Activated naive CD4-positive, alpha-beta T cell treated with anti-CD3 and anti-CD28 coated beads, Interleukin-2, amount 10 ng/mL, durations not matched to agents 7 days and 5 days (primary cell): ENCODE measurements at regions of chr17 and their contacts with region 1.

Region 1: DNA sequence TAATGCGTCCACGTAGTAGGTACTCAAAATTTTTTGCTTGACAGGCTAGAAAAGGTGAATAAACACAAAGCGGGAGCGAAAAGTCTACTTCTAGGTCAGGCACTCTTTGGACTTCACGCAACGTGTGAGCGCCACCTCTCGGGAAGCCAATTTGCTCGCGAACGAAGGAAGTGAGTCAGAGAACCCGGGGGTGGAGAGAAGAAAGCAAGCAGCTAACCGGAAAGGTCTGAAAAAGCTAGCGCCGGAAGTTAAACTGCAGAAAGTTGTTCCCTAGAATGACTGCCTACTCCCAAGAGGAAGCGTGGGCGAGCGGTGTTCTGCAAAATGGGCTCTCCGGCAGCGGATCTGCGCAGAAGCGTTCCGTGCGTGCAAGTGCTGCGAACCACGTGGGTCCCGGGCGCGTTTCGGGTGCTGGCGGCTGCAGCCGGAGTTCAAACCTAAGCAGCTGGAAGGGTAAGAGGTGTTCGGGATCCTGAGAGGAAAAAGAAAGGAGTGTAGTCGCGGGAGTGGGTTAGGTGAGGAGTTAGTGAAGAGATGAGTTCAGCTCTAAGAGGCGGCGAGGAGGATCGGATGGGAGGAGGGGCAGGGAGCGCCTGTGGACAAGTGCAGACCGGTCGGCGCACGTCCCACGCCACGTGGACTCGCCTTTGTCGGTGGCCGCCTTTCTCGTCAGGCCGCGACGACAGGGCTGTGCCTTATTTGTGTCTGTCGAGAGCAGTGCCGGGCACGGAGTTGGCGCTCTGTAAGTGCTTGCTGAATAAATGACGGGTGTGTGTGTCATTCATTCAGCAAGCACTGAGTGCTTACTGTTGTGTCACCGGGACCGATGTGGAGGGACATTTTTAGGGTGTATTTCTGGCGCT is at the start of gene NME1:
- DNase-seq: peak; percentile 97
- H3K4me3 Mint-ChIP-seq: no peak within 1 kb of the TSS
- H3K27ac Mint-ChIP-seq: no peak within 1 kb of the TSS
- H3K4me1 Mint-ChIP-seq: peaks cover 6% of the 10 kb centered on the region
- H3K27me3 Mint-ChIP-seq: no peaks in the 10 kb centered on the region

Region 2: GRCh38 chr17:51056813-51057510 is 96.5 kb before region 1 on chr17:
- CTCF ChIA-PET with region 1: interaction called, 10 read pairs
- DNase-seq: peak; percentile 52
- H3K4me3 Mint-ChIP-seq: no peak overlapping the region
- H3K27ac Mint-ChIP-seq: no peak overlapping the region
- H3K4me1 Mint-ChIP-seq: no peaks in the 10 kb centered on the region
- H3K27me3 Mint-ChIP-seq: no peaks in the 10 kb centered on the region